Activated CD8-positive, alpha-beta T cell treated with anti-CD3 and anti-CD28 coated beads for 36 hours (primary cell): ENCODE measurements at regions of chr2 and their contacts with region 1.

Region 1: DNA sequence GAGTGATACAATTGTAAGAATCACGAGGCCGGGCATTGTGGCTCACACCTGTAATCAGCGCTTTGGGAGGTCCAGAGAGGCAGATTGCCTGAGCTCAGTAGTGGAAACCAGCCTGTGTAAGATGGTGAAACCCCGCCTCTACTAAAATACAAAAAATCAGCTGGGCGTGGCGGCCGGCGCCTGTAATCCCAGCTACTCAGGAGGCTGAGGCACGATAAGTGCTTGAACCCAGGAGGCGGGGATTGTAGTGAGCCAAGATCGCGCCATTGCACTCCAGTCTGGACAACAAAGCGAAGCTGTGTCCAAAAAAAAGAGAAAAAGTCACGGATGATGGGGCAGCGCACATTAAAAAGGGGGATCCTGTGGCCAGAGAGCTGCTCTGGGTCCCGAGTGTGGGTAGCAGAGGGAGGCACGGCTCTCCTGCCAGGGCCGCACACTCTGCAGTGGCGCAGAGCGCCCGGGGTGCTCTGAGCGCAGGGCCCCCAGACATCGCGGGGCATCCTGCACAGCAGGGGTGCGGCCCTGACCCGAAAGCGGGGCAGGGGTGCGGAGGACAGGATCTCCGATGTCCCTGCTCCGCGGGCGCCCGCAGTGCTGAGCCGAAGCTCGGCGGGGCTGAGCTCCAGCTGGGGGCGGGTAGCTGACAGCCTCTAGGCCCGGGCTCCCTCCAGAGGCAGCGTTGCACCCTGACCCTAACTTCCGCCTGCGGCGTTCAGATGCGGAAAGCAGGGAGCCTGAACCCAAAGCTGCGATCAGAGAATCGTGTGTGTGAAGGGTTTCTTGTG is 30.4 kb upstream of the RAB6D start:
- DNase-seq: peak; percentile 51
- ATAC-seq: peak; percentile 87
- H3K4me3 Mint-ChIP-seq: no peak overlapping the region
- H3K27ac Mint-ChIP-seq: no peak overlapping the region
- H3K4me1 Mint-ChIP-seq: no peaks in the 10 kb centered on the region
- H3K27me3 Mint-ChIP-seq: peaks cover 3% of the 10 kb centered on the region
- CTCF ChIP-seq: no peak

Region 2: DNA sequence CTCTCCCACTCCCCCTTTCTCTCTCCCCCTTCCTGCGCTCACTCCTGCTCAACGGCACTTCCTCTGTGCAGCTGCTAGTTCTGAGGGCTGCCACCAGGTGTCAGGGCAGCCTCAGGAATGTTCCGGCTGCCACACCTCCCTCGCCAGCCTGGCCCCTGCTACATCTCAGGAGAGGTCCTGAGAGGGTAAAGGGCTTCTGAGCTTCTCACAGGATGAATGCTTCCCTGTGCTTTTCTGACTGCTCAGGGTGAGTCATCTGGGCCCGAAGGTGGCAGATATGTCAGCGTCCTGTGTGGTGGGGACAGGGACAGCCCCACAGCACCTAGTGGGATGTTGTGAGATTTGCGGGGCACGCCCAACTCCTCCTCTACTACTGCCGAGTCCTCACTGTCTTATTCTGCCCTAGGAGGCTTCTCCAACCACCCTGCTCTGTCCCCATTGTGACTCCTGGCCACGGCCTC is 240.2 kb before region 1 on chr2:
- CTCF ChIA-PET with region 1: interaction called, 3 read pairs
- POLR2A ChIA-PET with region 1: no interaction called
- intact Hi-C with region 1: loop called (anchors 5 kb)
- DNase-seq: peak; percentile 95
- ATAC-seq: peak; percentile 98
- H3K4me3 Mint-ChIP-seq: no peak overlapping the region
- H3K27ac Mint-ChIP-seq: peak overlapping the region; percentile 26
- H3K4me1 Mint-ChIP-seq: peaks cover 32% of the 10 kb centered on the region
- H3K27me3 Mint-ChIP-seq: no peaks in the 10 kb centered on the region
- CTCF ChIP-seq: peak; percentile 77

Region 3: GRCh38 chr2:131590896-131591295 is 196.6 kb after region 1 on chr2:
- CTCF ChIA-PET with region 1: no interaction called
- POLR2A ChIA-PET with region 1: no interaction called
- intact Hi-C with region 1: no loop called
- DNase-seq: no peak
- ATAC-seq: no peak
- H3K4me3 Mint-ChIP-seq: no peak overlapping the region
- H3K27ac Mint-ChIP-seq: no peak overlapping the region
- H3K4me1 Mint-ChIP-seq: no peaks in the 10 kb centered on the region
- H3K27me3 Mint-ChIP-seq: peaks cover 8% of the 10 kb centered on the region
- CTCF ChIP-seq: no peak